ENCODE measurements at regions of chr3 and their contacts with region 1.

Region 1: DNA sequence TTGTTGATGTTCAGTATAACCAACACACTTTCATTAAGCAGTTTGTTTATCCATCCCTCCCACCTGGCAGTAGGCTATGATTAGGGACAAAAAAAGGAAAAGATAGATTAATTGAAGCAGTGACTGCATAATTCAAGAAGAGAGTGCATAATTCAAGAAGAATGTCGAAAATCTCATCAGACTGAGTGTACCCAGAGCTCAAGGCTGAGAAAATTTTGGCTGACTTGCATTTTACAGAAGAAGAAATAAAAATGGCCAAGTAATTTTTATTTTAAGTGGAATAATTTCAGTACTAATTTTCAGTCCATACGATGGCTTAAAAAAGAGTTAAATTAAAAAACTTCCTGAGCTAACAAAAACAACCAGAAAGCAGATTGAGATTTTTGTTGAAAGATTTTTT is 145.4 kb upstream of the LRRFIP2 start:
- DNase-seq: no peak
- H3K4me3 ChIP-seq: no peak overlapping the region
- H3K27ac ChIP-seq: no peak overlapping the region
- H3K4me1 ChIP-seq: no peaks in the 10 kb centered on the region
- H3K27me3 ChIP-seq: no peaks in the 10 kb centered on the region
- CTCF ChIP-seq: no peak
- POLR2A ChIP-seq: no peak

Region 2: GRCh38 chr3:36941658-36942057 is 378.1 kb before region 1 on chr3:
- intact Hi-C with region 1: no loop called
- DNase-seq: no peak
- H3K4me3 ChIP-seq: no peak overlapping the region
- H3K27ac ChIP-seq: no peak overlapping the region
- H3K4me1 ChIP-seq: no peaks in the 10 kb centered on the region
- H3K27me3 ChIP-seq: no peaks in the 10 kb centered on the region
- CTCF ChIP-seq: no peak
- POLR2A ChIP-seq: no peak

Region 3: DNA sequence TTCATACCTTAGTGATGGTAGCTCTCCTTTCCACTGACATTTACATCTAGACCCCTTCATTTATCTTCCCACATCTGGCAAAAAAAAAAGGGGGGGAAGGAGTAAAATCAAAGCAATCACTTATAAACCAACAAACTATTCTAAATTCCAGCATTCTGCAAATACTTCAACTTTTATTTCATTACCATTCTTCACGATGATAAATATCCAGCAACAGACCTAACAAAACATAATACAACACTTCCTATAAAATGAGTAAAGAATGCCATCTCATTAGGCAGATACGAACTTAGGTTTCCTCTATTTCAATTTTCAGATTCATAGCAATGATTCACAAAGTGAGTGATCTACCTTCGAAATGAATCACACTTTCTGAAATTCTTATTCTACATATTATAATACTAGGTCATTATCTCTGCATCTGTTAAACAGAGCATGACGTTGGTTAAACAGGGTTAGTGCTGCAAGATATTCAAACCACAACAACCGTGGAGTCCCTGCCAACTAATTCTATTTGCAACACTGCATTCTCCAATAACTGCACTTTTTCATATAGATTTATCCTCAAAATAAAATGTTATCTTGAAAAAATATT is 145.2 kb before region 1 on chr3 and contains the start of gene LRRFIP2:
- intact Hi-C with region 1: loop called (anchors 5 kb)
- DNase-seq: no peak
- H3K4me3 ChIP-seq: peak within 1 kb of the TSS; percentile 83 to 100 (median 93)
- H3K27ac ChIP-seq: peak within 1 kb of the TSS; percentile 96 to 97
- H3K4me1 ChIP-seq: no peaks in the 10 kb centered on the region
- H3K27me3 ChIP-seq: no peaks in the 10 kb centered on the region
- CTCF ChIP-seq: no peak
- POLR2A ChIP-seq: no peak
- total RNA-seq, gene LRRFIP2: 50.2 to 65.9 (median 65.9) TPM

Region 4: DNA sequence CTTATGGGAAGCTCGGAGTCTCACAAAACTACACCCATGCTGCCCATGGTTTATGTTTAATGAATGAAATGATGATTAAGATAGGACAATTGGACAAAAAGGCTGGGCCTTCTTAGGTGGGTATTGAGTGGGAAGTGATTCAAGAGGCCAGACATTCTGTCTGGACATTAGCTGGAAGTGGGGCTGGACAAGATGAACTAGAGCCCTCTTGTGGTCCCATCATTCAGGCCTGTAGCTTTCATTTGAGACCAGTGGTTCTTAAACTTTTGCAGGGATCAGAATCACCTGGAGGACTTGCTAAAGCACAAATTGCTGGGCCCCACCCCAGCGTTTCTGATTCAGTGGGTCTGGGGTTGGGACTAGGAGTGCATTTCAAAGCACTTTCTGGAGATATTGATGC is 251.5 kb after region 1 on chr3:
- intact Hi-C with region 1: no loop called
- DNase-seq: no peak
- H3K4me3 ChIP-seq: no peak overlapping the region
- H3K27ac ChIP-seq: no peak overlapping the region
- H3K4me1 ChIP-seq: no peaks in the 10 kb centered on the region
- H3K27me3 ChIP-seq: no peaks in the 10 kb centered on the region
- CTCF ChIP-seq: no peak
- POLR2A ChIP-seq: no peak

Measured in breast epithelium (tissue), 4 donors.